ENCODE measurements at regions of chr5 and their contacts with region 1.

Region 1: GRCh38 chr5:157219491-157220271 is 39.0 kb downstream of the ITK start:
- DNase-seq: no peak
- H3K4me3 ChIP-seq: no peak overlapping the region
- H3K4me3 Mint-ChIP-seq: peak overlapping the region in 7 of 8 donors; percentile 57 to 76 (median 67)
- H3K27ac ChIP-seq: peak overlapping the region; percentile 44
- H3K27ac Mint-ChIP-seq: peak overlapping the region; percentile 87 to 96 (median 93)
- H3K4me1 ChIP-seq: peaks cover 98% of the 10 kb centered on the region
- H3K4me1 Mint-ChIP-seq: peaks cover 71 to 85% (median 81%) of the 10 kb centered on the region in 4 donors
- H3K27me3 ChIP-seq: no peaks in the 10 kb centered on the region
- H3K27me3 Mint-ChIP-seq: no peaks in the 10 kb centered on the region

Region 2: GRCh38 chr5:157172403-157172802 is 47.3 kb before region 1 on chr5:
- CTCF ChIA-PET with region 1: interaction called, 3 read pairs
- POLR2A ChIA-PET with region 1: interaction called, 1,020 read pairs
- intact Hi-C with region 1: no loop called
- DNase-seq: peak; percentile 71 to 93 (median 80)
- H3K4me3 ChIP-seq: peak overlapping the region in 1 of 2 donors; percentile 20
- H3K4me3 Mint-ChIP-seq: peak overlapping the region; percentile 55 to 79 (median 74)
- H3K27ac ChIP-seq: peak overlapping the region; percentile 61
- H3K27ac Mint-ChIP-seq: peak overlapping the region; percentile 82 to 97 (median 94)
- H3K4me1 ChIP-seq: peaks cover 55% of the 10 kb centered on the region
- H3K4me1 Mint-ChIP-seq: peaks cover 42 to 82% (median 66%) of the 10 kb centered on the region in 4 donors
- H3K27me3 ChIP-seq: no peaks in the 10 kb centered on the region
- H3K27me3 Mint-ChIP-seq: no peaks in the 10 kb centered on the region

Region 3: GRCh38 chr5:157189223-157189622 is 30.5 kb before region 1 on chr5:
- CTCF ChIA-PET with region 1: interaction called, 33 read pairs
- POLR2A ChIA-PET with region 1: interaction called, 1,020 read pairs
- intact Hi-C with region 1: loop called (anchors 2 kb)
- DNase-seq: no peak
- H3K4me3 ChIP-seq: peak overlapping the region; percentile 44 to 59
- H3K4me3 Mint-ChIP-seq: peak overlapping the region; percentile 84 to 100 (median 96)
- H3K27ac ChIP-seq: peak overlapping the region; percentile 64
- H3K27ac Mint-ChIP-seq: peak overlapping the region; percentile 84 to 97 (median 93)
- H3K4me1 ChIP-seq: peaks cover 97% of the 10 kb centered on the region
- H3K4me1 Mint-ChIP-seq: peaks cover 66 to 91% (median 78%) of the 10 kb centered on the region in 4 donors
- H3K27me3 ChIP-seq: no peaks in the 10 kb centered on the region
- H3K27me3 Mint-ChIP-seq: no peaks in the 10 kb centered on the region

Region 4: GRCh38 chr5:157233515-157233914 is 13.8 kb after region 1 on chr5:
- CTCF ChIA-PET with region 1: interaction called, 6 read pairs
- POLR2A ChIA-PET with region 1: interaction called, 14 read pairs
- intact Hi-C with region 1: loop called (anchors 1 kb)
- DNase-seq: peak; percentile 47 to 83 (median 74)
- H3K4me3 ChIP-seq: no peak overlapping the region
- H3K4me3 Mint-ChIP-seq: peak overlapping the region in 4 of 8 donors; percentile 25 to 55 (median 47)
- H3K27ac ChIP-seq: peak overlapping the region; percentile 41
- H3K27ac Mint-ChIP-seq: peak overlapping the region; percentile 88 to 94 (median 90)
- H3K4me1 ChIP-seq: peaks cover 76% of the 10 kb centered on the region
- H3K4me1 Mint-ChIP-seq: peaks cover 32 to 62% (median 47%) of the 10 kb centered on the region in 4 donors
- H3K27me3 ChIP-seq: no peaks in the 10 kb centered on the region
- H3K27me3 Mint-ChIP-seq: no peaks in the 10 kb centered on the region

Region 5: GRCh38 chr5:157265714-157266285 is 46.1 kb after region 1 on chr5 and contains the start of gene CYFIP2:
- CTCF ChIA-PET with region 1: no interaction called
- POLR2A ChIA-PET with region 1: interaction called, 4 read pairs
- intact Hi-C with region 1: loop called (anchors 2 kb)
- DNase-seq: peak; percentile 84 to 88 (median 85)
- H3K4me3 ChIP-seq: peak within 1 kb of the TSS; percentile 62 to 75
- H3K4me3 Mint-ChIP-seq: peak within 1 kb of the TSS; percentile 95 to 100 (median 97)
- H3K27ac ChIP-seq: peak within 1 kb of the TSS; percentile 78
- H3K27ac Mint-ChIP-seq: peak within 1 kb of the TSS; percentile 97 to 99 (median 98)
- H3K4me1 ChIP-seq: peaks cover 65% of the 10 kb centered on the region
- H3K4me1 Mint-ChIP-seq: peaks cover 48 to 82% (median 66%) of the 10 kb centered on the region in 4 donors
- H3K27me3 ChIP-seq: no peaks in the 10 kb centered on the region
- H3K27me3 Mint-ChIP-seq: no peaks in the 10 kb centered on the region
- total RNA-seq, gene CYFIP2: 317 to 325 TPM

Region 6: GRCh38 chr5:157710872-157711271 is 491.2 kb after region 1 on chr5:
- CTCF ChIA-PET with region 1: no interaction called
- POLR2A ChIA-PET with region 1: no interaction called
- intact Hi-C with region 1: no loop called
- DNase-seq: no peak
- H3K4me3 ChIP-seq: no peak overlapping the region
- H3K4me3 Mint-ChIP-seq: no peak overlapping the region
- H3K27ac ChIP-seq: no peak overlapping the region
- H3K27ac Mint-ChIP-seq: no peak overlapping the region
- H3K4me1 ChIP-seq: no peaks in the 10 kb centered on the region
- H3K4me1 Mint-ChIP-seq: peaks cover 0 to 2% (median 0%) of the 10 kb centered on the region in 4 donors
- H3K27me3 ChIP-seq: no peaks in the 10 kb centered on the region
- H3K27me3 Mint-ChIP-seq: no peaks in the 10 kb centered on the region

Measured in CD4-positive, alpha-beta memory T cell (primary cell).